ENCODE measurements at regions of chr14 and their contacts with region 1.

Region 1: DNA sequence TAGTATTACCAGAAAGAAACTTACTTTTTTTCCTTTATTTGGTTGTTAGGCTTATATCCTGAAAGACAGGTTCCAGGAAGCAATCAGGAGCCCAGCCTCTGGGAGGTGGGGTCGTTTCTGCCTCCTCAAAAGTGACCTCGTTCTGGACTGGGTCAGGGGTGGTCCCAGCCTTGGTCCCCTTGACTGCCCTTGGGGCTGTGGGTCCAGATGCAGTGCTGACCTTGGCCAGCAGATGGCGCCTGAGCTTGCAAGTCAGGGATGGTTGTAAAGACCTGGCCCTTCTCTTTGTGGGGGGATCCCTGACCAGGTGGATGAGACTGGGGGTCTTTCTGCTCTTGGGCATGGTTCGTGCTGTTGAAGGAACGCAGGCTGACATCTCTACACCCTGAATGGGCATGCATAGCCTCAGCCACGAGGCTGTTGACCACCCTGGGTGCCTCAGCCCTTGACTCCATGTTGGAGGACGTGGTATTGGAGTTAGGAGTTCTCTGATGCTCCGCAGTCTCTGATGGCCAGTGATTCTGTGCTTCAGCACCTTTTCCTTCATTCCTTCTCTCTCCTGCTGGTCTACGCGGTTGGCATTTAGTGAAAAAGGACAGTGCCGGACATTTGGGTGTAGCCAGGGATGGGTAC is 62.4 kb downstream of the ADCK1 start:
- DNase-seq: peak; percentile 31 to 77 (median 68)
- H3K4me3 ChIP-seq: no peak overlapping the region
- H3K4me3 Mint-ChIP-seq: no peak overlapping the region
- H3K27ac ChIP-seq: no peak overlapping the region
- H3K27ac Mint-ChIP-seq: no peak overlapping the region
- H3K4me1 ChIP-seq: no peaks in the 10 kb centered on the region
- H3K4me1 Mint-ChIP-seq: no peaks in the 10 kb centered on the region
- H3K27me3 ChIP-seq: no peaks in the 10 kb centered on the region
- H3K27me3 Mint-ChIP-seq: no peaks in the 10 kb centered on the region

Region 2: DNA sequence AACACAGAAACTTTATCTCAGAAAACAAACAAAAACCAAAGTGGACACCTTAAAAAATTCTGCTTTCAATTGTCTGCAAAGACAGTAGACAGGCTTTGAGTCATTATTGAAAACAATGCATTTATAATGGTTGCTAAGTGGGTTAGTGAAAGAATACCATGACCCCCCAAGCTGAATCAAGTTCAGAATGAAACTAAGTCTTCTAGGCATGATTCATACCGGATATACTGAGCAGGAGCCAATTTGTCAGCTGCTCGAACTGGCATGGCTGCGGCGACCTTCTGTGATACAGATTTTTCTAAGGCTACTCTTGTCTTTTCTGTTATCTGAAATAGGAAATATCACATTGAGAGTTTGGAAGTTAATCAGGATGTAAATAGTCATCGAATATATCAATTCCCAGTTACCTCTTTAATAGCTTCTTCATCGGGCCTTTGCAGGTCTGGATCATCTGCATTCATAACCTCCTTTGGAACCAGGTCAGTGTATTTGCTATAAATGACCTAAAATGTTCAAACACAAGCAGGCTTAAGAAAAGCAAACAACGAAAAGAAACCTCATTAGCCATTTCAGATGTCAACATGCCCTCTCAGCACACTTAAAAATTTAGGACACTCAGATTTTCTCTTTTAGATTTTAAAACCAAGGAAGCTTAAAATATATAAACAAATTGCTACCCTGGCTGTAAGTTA is 123.6 kb before region 1 on chr14:
- CTCF ChIA-PET with region 1: no interaction called
- POLR2A ChIA-PET with region 1: no interaction called
- DNase-seq: peak in 2 of 5 donors; percentile 2 to 6
- H3K4me3 ChIP-seq: no peak overlapping the region
- H3K4me3 Mint-ChIP-seq: peak overlapping the region in 5 of 7 donors; percentile 6 to 77 (median 54)
- H3K27ac ChIP-seq: no peak overlapping the region
- H3K27ac Mint-ChIP-seq: peak overlapping the region; percentile 47 to 94 (median 84)
- H3K4me1 ChIP-seq: peaks cover 5% of the 10 kb centered on the region
- H3K4me1 Mint-ChIP-seq: peaks cover 25 to 47% (median 40%) of the 10 kb centered on the region in 3 donors
- H3K27me3 ChIP-seq: no peaks in the 10 kb centered on the region
- H3K27me3 Mint-ChIP-seq: no peaks in the 10 kb centered on the region

Region 3: GRCh38 chr14:77882098-77882497 is 19.8 kb after region 1 on chr14:
- CTCF ChIA-PET with region 1: interaction called, 11 read pairs
- POLR2A ChIA-PET with region 1: no interaction called
- DNase-seq: no peak
- H3K4me3 ChIP-seq: no peak overlapping the region
- H3K4me3 Mint-ChIP-seq: no peak overlapping the region
- H3K27ac ChIP-seq: no peak overlapping the region
- H3K27ac Mint-ChIP-seq: peak overlapping the region in 1 of 8 donors; percentile 8
- H3K4me1 ChIP-seq: no peaks in the 10 kb centered on the region
- H3K4me1 Mint-ChIP-seq: no peaks in the 10 kb centered on the region
- H3K27me3 ChIP-seq: no peaks in the 10 kb centered on the region
- H3K27me3 Mint-ChIP-seq: no peaks in the 10 kb centered on the region

Region 4: DNA sequence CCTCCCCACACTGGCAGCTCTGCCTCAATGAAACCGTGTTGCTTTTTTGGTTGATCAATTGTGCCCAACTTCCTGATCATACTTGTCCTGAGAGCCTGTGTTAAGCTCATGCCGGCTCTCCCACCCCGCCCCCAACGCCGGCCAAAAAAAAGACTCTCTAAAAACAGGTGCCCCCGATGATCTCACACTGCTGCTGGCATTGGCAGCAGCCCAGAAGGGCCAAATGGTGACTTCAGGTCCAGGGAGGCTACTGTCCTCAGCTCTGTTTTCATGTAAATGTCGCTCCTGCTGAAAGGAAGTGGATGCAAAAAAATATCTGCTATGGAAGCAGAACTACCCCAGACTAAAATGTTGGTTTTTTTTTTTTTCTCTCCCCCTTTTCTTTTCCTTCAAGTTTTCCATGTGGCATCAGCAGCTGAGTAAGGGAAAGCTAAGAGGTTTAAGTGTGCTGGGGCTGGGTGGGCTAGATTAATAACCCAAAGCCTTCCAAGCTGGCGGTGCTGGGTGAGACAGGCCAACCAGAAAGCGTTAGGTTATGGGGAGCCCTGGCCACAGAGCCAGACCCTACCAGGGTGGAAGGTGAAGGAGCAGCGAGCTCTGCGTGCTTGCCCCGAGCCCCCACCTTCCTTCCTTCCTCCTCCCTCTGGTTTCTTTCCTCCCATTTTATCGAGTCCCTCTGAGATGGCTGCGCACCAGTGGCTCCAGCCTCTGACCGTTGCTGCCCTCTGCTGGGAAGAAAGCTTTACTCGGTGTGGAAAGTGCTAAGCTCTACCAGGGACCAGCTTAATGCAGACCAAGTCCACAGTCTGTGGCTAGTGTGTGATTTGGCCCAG is 704.0 kb after region 1 on chr14:
- CTCF ChIA-PET with region 1: interaction called, 11 read pairs
- POLR2A ChIA-PET with region 1: no interaction called
- DNase-seq: peak in 4 of 5 donors; percentile 1 to 51 (median 15)
- H3K4me3 ChIP-seq: no peak overlapping the region
- H3K4me3 Mint-ChIP-seq: peak overlapping the region in 6 of 7 donors; percentile 15 to 74 (median 48)
- H3K27ac ChIP-seq: no peak overlapping the region
- H3K27ac Mint-ChIP-seq: peak overlapping the region in 2 of 8 donors; percentile 43 to 82
- H3K4me1 ChIP-seq: no peaks in the 10 kb centered on the region
- H3K4me1 Mint-ChIP-seq: peaks cover 0 to 8% (median 0%) of the 10 kb centered on the region in 3 donors
- H3K27me3 ChIP-seq: no peaks in the 10 kb centered on the region
- H3K27me3 Mint-ChIP-seq: peaks cover 0 to 2% of the 10 kb centered on the region in 2 donors

Measured in CD8-positive, alpha-beta memory T cell (primary cell).